Sciatic nerve (tissue), 2 donors: ENCODE measurements at regions of chr21 and their contacts with region 1.

Region 1: DNA sequence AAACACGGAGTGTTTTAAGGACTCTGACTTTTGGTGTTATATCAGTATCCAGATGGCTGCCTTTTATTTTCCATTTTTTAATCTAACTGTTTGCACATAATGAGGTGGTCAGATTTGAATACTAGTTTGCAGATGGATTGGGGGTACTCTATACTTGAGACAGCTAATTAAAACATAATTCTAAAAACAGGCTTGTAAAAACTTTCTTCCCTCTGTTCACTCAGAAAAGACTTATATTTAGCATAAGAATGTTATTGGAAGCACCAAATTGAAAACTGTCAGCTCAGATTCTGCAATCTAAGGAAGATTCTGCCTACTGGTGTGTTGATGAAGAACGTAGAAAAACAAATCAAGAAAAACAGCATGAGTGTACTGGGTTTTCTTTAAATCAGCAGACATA is 44.0 kb upstream of the NRIP1 start:
- DNase-seq: no peak
- ATAC-seq: no peak

Region 2: DNA sequence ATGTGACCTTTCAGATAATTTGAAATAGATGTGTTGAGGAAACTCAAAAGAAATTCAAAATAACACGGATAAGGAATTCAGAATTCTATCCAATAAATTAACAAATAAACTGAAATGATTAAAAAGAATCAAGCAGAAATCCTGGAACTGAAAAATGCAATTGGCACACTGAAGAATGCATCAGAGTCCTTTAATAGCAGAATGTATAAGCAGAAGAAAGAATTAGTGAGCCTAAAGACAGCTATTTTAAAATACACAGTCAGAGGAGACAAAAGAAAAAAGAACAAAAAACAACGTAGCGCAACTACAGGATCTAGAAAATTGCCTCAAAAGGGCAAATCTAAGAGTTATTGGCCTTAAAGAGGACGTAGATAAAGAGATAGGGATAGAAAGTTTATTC is 463.1 kb before region 1 on chr21:
- intact Hi-C with region 1: loop called (anchors 10 kb)
- DNase-seq: no peak
- ATAC-seq: no peak